CD8-positive, alpha-beta T cell (primary cell): ENCODE measurements at regions of chr7 and their contacts with region 1.

Region 1: GRCh38 chr7:101244375-101245146 is at the start of gene FIS1:
- DNase-seq: peak; percentile 81 to 96 (median 92)
- ATAC-seq: peak; percentile 95
- H3K4me3 ChIP-seq: peak within 1 kb of the TSS; percentile 94 to 98
- H3K4me3 Mint-ChIP-seq: peak within 1 kb of the TSS; percentile 99
- H3K27ac ChIP-seq: peak within 1 kb of the TSS; percentile 92 to 93
- H3K27ac Mint-ChIP-seq: peak within 1 kb of the TSS; percentile 99
- H3K4me1 ChIP-seq: peaks cover 18% of the 10 kb centered on the region
- H3K4me1 Mint-ChIP-seq: peaks cover 46% of the 10 kb centered on the region
- H3K27me3 ChIP-seq: no peaks in the 10 kb centered on the region
- H3K27me3 Mint-ChIP-seq: no peaks in the 10 kb centered on the region
- CTCF ChIP-seq: peak; percentile 96
- total RNA-seq, gene FIS1: 66.1 to 72.6 TPM

Region 2: GRCh38 chr7:99465421-99465768 is 1779.2 kb before region 1 on chr7:
- CTCF ChIA-PET with region 1: no interaction called
- POLR2A ChIA-PET with region 1: no interaction called
- intact Hi-C with region 1: loop called in 1 of 2 experiments (anchors 10 kb)
- DNase-seq: no peak
- ATAC-seq: no peak
- H3K4me3 ChIP-seq: peak overlapping the region; percentile 77 to 92
- H3K4me3 Mint-ChIP-seq: peak overlapping the region; percentile 96
- H3K27ac ChIP-seq: peak overlapping the region; percentile 61 to 82
- H3K27ac Mint-ChIP-seq: peak overlapping the region; percentile 96
- H3K4me1 ChIP-seq: peaks cover 13% of the 10 kb centered on the region
- H3K4me1 Mint-ChIP-seq: peaks cover 39% of the 10 kb centered on the region
- H3K27me3 ChIP-seq: no peaks in the 10 kb centered on the region
- H3K27me3 Mint-ChIP-seq: no peaks in the 10 kb centered on the region
- CTCF ChIP-seq: no peak

Region 3: DNA sequence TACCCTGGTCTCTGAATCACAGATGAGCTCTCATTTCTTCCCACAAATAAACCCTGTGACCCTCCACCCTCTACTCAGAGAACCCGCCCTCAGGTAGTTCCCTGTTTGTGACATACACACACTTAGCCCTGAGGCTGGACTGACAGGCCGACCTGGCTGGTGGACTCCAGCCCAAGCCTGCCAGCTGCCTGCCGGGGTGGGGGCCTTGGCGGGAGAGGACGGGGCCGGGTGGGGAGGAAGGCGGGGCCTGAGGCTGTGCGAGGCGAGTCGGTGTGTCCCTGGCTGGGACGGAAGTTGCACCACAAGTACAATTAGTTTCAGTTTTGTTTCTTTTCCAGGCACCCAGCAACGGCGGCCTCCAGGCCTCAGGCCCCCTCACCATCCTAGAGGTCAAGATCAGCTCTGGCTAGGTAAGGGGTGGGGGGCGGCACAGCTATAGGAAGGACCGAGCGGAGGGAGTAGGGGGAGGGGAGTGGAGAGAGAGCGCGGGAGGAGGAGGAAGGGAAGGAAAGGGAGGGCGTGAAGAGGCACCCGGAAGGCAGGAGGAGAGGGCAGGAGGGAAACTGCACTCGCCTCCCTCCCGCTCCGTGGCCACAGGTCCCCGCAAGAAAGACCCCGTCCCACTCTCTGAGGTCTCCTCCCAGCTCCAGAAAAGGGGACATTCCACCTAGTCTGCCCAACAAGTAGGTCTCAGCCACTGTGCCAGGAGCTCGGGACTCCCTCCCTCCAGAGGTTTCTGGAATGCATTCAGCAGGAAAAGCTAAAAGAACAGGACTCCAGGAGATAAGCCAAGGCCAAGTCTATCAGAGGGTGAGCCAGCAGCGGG is 159.2 kb before region 1 on chr7 and contains the start of gene TRIM56:
- CTCF ChIA-PET with region 1: interaction called, 3 read pairs
- POLR2A ChIA-PET with region 1: no interaction called
- intact Hi-C with region 1: loop called in 1 of 2 experiments (anchors 1 kb)
- DNase-seq: peak; percentile 43 to 89 (median 76)
- ATAC-seq: peak; percentile 91
- H3K4me3 ChIP-seq: peak within 1 kb of the TSS; percentile 81 to 95
- H3K4me3 Mint-ChIP-seq: peak within 1 kb of the TSS; percentile 98
- H3K27ac ChIP-seq: peak within 1 kb of the TSS; percentile 91 to 94
- H3K27ac Mint-ChIP-seq: peak within 1 kb of the TSS; percentile 98
- H3K4me1 ChIP-seq: peaks cover 30% of the 10 kb centered on the region
- H3K4me1 Mint-ChIP-seq: peaks cover 27% of the 10 kb centered on the region
- H3K27me3 ChIP-seq: no peaks in the 10 kb centered on the region
- H3K27me3 Mint-ChIP-seq: no peaks in the 10 kb centered on the region
- CTCF ChIP-seq: no peak
- total RNA-seq, gene TRIM56: 24.0 to 26.0 TPM

Region 4: GRCh38 chr7:101153969-101154692 is 90.4 kb before region 1 on chr7 and contains the start of gene AP1S1:
- CTCF ChIA-PET with region 1: interaction called, 3 read pairs
- POLR2A ChIA-PET with region 1: interaction called, 3 read pairs
- intact Hi-C with region 1: loop called in 1 of 2 experiments (anchors 2 kb)
- DNase-seq: peak; percentile 76 to 96 (median 87)
- ATAC-seq: peak; percentile 88
- H3K4me3 ChIP-seq: peak within 1 kb of the TSS; percentile 61 to 77
- H3K4me3 Mint-ChIP-seq: peak within 1 kb of the TSS; percentile 88
- H3K27ac ChIP-seq: no peak within 1 kb of the TSS
- H3K27ac Mint-ChIP-seq: peak within 1 kb of the TSS; percentile 47
- H3K4me1 ChIP-seq: peaks cover 12% of the 10 kb centered on the region
- H3K4me1 Mint-ChIP-seq: peaks cover 11% of the 10 kb centered on the region
- H3K27me3 ChIP-seq: no peaks in the 10 kb centered on the region
- H3K27me3 Mint-ChIP-seq: peaks cover 9% of the 10 kb centered on the region
- CTCF ChIP-seq: no peak
- total RNA-seq, gene AP1S1: 2.1 to 2.2 TPM

Region 5: DNA sequence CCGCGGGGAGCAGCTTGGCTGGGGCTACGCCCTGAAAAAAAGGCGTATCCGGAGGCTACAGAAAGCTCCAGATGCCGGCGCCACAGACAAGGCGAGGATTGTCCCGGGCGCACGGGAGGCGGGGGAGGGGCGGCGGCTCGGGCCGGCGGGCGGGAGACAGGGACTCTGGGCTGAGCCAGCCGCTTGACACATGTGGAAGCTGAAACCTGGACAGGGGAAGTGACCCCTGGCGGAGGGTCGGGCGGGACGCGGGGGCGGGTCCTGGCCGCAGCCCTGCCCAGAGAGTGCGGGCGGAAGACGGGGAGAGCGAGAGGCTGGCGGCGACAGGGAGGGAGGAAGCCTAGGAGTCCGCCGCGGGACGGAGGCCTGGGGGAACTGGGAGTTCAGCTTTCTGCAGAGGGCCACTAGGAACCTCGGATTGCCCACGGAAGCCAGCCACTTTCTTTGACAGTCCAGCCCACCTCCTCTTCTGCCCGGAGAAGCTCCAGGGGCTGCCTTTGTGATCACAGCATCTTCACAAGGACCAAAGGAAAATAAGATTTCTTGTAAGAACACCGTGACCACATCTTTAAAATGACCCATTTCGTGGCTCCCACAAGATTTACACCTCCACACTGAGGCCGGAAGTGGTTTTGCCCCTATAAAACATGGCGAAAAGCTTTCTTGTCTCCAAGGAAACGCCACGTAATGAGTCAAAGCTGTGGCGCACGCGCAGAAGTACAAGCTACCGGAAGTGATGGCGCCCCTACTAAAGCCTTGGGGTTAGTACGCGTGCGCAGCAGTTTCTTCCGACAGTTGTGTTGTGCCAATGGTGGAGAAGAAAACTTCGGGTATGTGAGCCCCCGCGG is 26.9 kb before region 1 on chr7 and contains the starts of genes PLOD3 and ZNHIT1:
- CTCF ChIA-PET with region 1: interaction called, 32 read pairs
- POLR2A ChIA-PET with region 1: interaction called, 29 read pairs
- intact Hi-C with region 1: loop called (anchors 1 kb)
- DNase-seq: peak; percentile 89 to 99 (median 96)
- ATAC-seq: peak; percentile 75
- H3K4me3 ChIP-seq: peak within 1 kb of the TSS; percentile 82 to 91
- H3K4me3 Mint-ChIP-seq: peak within 1 kb of the TSS; percentile 94
- H3K27ac ChIP-seq: peak within 1 kb of the TSS; percentile 71 to 84
- H3K27ac Mint-ChIP-seq: peak within 1 kb of the TSS; percentile 91
- H3K4me1 ChIP-seq: peaks cover 29% of the 10 kb centered on the region
- H3K4me1 Mint-ChIP-seq: peaks cover 33% of the 10 kb centered on the region
- H3K27me3 ChIP-seq: no peaks in the 10 kb centered on the region
- H3K27me3 Mint-ChIP-seq: no peaks in the 10 kb centered on the region
- CTCF ChIP-seq: no peak
- total RNA-seq, gene PLOD3: 6.6 to 7.5 TPM
- total RNA-seq, gene ZNHIT1: 23.7 to 24.6 TPM

Region 6: GRCh38 chr7:101287032-101287431 is 42.5 kb after region 1 on chr7:
- CTCF ChIA-PET with region 1: interaction called, 14 read pairs
- POLR2A ChIA-PET with region 1: interaction called, 7 read pairs
- intact Hi-C with region 1: loop called (anchors 1 kb)
- DNase-seq: no peak
- ATAC-seq: no peak
- H3K4me3 ChIP-seq: no peak overlapping the region
- H3K4me3 Mint-ChIP-seq: no peak overlapping the region
- H3K27ac ChIP-seq: no peak overlapping the region
- H3K27ac Mint-ChIP-seq: no peak overlapping the region
- H3K4me1 ChIP-seq: peaks cover 4% of the 10 kb centered on the region
- H3K4me1 Mint-ChIP-seq: peaks cover 24% of the 10 kb centered on the region
- H3K27me3 ChIP-seq: peaks cover 0 to 2% of the 10 kb centered on the region in 2 experiments
- H3K27me3 Mint-ChIP-seq: peaks cover 9% of the 10 kb centered on the region
- CTCF ChIP-seq: no peak

Region 7: DNA sequence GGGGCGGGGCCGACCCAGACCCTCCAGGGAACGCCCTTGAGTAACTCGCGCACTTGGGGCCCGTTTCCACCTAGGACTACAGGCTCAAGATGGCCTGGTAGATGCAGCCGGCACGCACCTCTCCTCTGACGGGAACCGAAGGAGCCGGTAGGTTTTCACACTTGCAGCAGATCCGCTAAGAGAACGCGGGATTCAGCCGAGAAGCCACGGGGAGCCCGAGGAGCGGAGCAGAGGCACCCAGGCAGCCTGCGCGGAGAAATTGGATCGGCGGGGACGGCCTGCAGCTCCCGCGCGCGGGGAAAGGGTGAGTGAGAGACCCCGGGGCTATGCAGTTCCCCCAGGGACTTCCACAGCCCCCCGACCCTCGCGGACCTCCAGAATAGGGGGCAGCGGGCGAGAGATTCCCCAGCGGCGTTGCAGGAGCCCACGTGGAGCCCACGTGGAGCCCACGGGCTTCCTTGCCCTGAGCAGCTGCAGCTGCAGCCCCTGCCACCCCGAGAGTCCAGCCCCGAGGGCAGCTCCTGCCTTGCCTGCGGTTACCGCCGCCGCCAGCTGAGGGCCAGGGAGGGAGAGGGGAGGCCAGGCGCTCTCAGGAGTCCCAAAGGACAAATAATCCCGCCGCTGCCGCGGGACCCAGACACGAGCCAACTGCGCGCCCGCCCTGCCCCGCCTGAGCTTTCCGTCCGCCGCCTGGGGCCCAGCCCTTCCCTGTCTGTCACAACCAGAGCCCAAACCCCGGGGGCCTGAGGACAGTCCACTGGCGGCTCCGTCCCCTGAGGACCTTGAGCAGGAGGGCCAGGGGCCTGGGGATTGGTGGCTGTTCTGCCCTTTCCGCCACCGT is 63.9 kb after region 1 on chr7:
- CTCF ChIA-PET with region 1: no interaction called
- POLR2A ChIA-PET with region 1: no interaction called
- intact Hi-C with region 1: no loop called
- DNase-seq: peak in 4 of 9 experiments; percentile 6 to 25 (median 16)
- ATAC-seq: peak; percentile 55
- H3K4me3 ChIP-seq: peak overlapping the region; percentile 22 to 46
- H3K4me3 Mint-ChIP-seq: peak overlapping the region; percentile 88
- H3K27ac ChIP-seq: no peak overlapping the region
- H3K27ac Mint-ChIP-seq: no peak overlapping the region
- H3K4me1 ChIP-seq: no peaks in the 10 kb centered on the region
- H3K4me1 Mint-ChIP-seq: peaks cover 6% of the 10 kb centered on the region
- H3K27me3 ChIP-seq: peaks cover 8 to 26% of the 10 kb centered on the region in 2 experiments
- H3K27me3 Mint-ChIP-seq: peaks cover 28% of the 10 kb centered on the region
- CTCF ChIP-seq: no peak